IMR-90 (cell line): ENCODE measurements at regions of chr15 and their contacts with region 1.

Region 1: GRCh38 chr15:101258238-101259144 is 6.6 kb upstream of the CHSY1 start:
- DNase-seq: peak; percentile 80
- ATAC-seq: peak; percentile 83
- H3K4me3 ChIP-seq: no peak overlapping the region
- H3K27ac ChIP-seq: no peak overlapping the region
- H3K4me1 ChIP-seq: peaks cover 10% of the 10 kb centered on the region
- H3K27me3 ChIP-seq: no peaks in the 10 kb centered on the region
- CTCF ChIP-seq: peak; percentile 97
- POLR2A ChIP-seq: peak; percentile 25; the same call in 1 of the 2 replicates
- RAD21 ChIP-seq: peak; percentile 97

Region 2: GRCh38 chr15:100627789-100628395 is 630.6 kb before region 1 on chr15:
- CTCF ChIA-PET with region 1: no interaction called
- POLR2A ChIA-PET with region 1: no interaction called
- dilution Hi-C with region 1: no loop called
- in situ Hi-C with region 1: loop called (anchors 10 kb)
- intact Hi-C with region 1: loop called (anchors 5 kb)
- DNase-seq: peak; percentile 82
- ATAC-seq: peak; percentile 98
- H3K4me3 ChIP-seq: no peak overlapping the region
- H3K27ac ChIP-seq: no peak overlapping the region
- H3K4me1 ChIP-seq: no peaks in the 10 kb centered on the region
- H3K27me3 ChIP-seq: no peaks in the 10 kb centered on the region
- CTCF ChIP-seq: peak; percentile 86
- POLR2A ChIP-seq: 0 out of 2 replicates have a peak, but pooled peaks have one; percentile 23
- RAD21 ChIP-seq: peak; percentile 86

Region 3: DNA sequence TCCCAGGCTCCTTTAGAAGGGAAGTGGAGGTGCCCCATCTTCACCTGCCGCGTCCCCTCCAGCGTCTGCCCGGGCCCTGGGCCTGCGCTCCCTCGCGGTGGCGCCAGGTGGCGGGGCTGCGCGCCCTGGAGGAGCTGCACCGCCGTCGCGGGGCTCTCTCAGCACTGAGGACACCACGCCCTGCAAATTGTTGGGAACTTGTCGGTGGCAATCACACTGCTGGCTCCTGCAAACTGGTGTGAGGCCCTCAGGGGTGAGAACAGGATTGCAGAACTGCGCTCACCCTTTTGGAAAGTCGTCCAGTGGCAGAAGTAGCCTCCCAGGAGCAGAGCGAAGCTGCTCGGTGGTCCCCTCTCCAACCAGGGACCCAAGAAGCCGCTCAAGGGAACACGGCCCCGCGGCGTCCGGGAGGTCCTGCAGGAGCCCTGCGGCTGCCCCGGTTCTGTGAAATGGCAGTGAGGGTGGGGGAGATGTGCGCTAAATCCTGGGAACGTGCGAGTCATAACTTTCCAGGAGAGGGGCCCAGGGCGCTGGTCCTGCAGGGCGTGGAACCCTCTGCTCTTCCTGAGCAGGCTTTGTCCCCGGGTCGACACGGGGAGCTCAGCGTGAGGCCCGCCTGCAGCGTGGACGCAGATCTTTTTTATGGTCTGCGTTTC is 340.3 kb before region 1 on chr15:
- CTCF ChIA-PET with region 1: no interaction called
- POLR2A ChIA-PET with region 1: no interaction called
- dilution Hi-C with region 1: no loop called
- in situ Hi-C with region 1: loop called (anchors 25 kb)
- intact Hi-C with region 1: loop called (anchors 5 kb)
- DNase-seq: peak; percentile 62
- ATAC-seq: peak; percentile 83
- H3K4me3 ChIP-seq: peak overlapping the region; percentile 60
- H3K27ac ChIP-seq: no peak overlapping the region; the same call in 1 of the 2 replicates
- H3K4me1 ChIP-seq: no peaks in the 10 kb centered on the region; the same call in 1 of the 2 replicates
- H3K27me3 ChIP-seq: no peaks in the 10 kb centered on the region
- CTCF ChIP-seq: peak; percentile 90
- POLR2A ChIP-seq: no peak
- RAD21 ChIP-seq: peak; percentile 85

Region 4: DNA sequence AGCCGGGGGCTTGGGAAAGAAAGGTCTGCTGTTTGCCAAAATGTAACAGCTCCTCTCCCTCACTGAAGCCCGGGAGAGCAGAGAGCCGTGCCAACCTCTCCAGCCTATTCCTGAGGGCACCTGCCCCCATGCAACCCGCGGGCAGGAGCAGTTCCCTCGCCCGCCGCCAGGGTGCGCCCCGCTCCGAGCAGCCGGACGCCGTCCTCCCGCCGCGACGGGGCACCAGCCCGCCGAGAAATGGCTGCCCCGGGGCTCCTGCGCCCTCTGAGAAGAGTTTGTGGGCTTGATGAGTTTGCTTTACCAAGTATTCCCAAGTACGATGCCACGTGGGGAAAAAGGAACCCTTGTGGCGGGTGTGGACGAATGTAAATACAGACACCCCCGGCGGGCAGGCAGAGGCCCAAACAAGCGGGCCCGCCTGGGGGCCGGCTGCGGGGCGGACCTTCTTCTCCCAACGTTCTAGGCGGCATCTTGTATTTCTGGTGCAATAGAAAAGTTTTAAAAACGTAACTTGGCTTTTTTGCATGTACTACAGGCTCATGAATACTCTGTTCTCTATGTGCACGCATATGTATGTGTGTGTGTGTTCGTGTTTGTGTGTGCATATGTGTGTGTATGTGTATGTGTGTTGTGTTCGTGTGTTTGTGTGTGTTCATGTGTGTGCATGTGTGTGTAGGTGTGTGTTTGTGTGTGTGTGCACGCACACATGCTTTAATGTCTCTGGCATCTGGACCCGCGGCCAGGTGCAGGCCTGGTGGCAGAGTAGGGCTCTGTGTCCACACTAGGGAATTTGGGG is 169.5 kb before region 1 on chr15:
- CTCF ChIA-PET with region 1: no interaction called
- POLR2A ChIA-PET with region 1: no interaction called
- dilution Hi-C with region 1: no loop called
- in situ Hi-C with region 1: loop called (anchors 5 kb)
- intact Hi-C with region 1: loop called (anchors 1 kb)
- DNase-seq: no peak
- ATAC-seq: peak; percentile 93
- H3K4me3 ChIP-seq: no peak overlapping the region
- H3K27ac ChIP-seq: no peak overlapping the region
- H3K4me1 ChIP-seq: peaks cover 15% of the 10 kb centered on the region
- H3K27me3 ChIP-seq: no peaks in the 10 kb centered on the region
- CTCF ChIP-seq: peak; percentile 95
- POLR2A ChIP-seq: peak; percentile 40; the same call in 1 of the 2 replicates
- RAD21 ChIP-seq: peak; percentile 93